Heart right ventricle (tissue), 16 donors: ENCODE measurements at regions of chr17 and their contacts with region 1.

Region 1: DNA sequence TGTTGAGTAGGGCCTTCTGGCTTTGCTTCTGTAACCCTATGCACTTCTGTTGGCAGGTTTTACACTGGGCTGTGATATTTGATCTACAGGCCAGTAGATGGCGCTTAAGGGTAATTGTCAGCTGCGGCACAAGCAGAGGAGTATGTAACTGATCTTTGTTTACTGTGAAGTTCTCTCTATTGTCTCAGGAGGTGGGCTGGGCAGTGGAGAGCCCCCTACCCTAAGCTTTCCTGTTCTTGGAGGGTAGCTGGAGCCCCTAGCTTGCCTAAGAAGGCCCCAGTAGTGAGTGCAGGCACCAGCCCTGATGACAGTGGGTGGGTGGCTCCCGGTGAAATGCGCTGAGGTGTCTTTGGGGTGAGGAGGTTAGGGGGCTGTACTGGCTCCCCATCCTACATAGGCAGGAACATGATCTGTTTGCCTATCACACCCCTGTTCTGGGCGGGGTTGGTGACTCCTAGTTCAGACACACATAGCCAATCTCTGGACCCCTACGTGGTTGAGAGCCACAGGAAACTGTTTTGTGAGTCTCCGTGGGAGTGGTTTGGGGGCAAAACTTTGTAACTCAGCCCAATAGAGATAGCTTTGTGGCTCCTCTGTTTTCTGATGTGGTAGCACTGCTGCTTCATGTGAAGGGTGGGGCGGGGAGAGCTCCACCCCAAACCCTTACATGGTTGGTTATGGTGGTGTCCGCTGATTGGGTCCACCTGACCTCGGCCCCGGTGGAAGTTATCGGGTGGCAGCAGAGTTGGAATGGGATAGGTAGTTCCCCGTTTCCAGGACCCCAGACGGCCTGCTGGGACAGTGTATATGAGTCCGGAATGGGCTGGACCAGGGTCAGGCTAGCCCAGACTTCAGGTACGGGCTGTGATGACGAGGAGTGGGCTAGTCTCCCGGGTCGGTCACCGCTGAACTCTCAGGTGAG is 60.4 kb downstream of the SLFN11 start:
- DNase-seq: peak; percentile 33 to 60
- ATAC-seq: peak; percentile 84 to 92 (median 90)
- H3K4me3 ChIP-seq: peak overlapping the region in 9 of 10 donors; percentile 31 to 58 (median 53)
- H3K27ac ChIP-seq: peak overlapping the region; percentile 25 to 91 (median 80)
- H3K4me1 ChIP-seq: peaks cover 7 to 35% (median 33%) of the 10 kb centered on the region in 9 donors
- H3K27me3 ChIP-seq: no peaks in the 10 kb centered on the region
- CTCF ChIP-seq: peak; percentile 55 to 91 (median 83)

Region 2: DNA sequence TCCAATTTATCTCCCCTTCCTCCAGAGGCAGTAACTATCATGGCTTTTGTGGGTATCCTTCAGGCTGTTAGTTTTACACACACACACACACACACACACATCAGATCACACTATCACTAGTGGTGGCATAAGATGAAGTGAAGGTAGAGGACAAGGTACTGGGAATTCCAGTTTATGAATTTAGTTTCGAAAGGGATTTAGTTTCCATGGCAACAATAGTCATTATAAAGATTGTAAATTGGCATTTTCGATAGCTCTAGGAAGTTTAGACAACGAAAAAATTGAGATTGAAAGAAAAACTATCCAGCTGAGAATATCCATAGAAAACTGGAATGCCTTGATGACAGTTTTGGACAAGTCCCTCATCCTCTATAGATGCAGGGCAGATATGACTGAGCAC is 39.4 kb before region 1 on chr17:
- intact Hi-C with region 1: no loop called
- DNase-seq: no peak
- ATAC-seq: no peak
- H3K4me3 ChIP-seq: no peak overlapping the region
- H3K27ac ChIP-seq: no peak overlapping the region
- H3K4me1 ChIP-seq: no peaks in the 10 kb centered on the region
- H3K27me3 ChIP-seq: peaks cover 0 to 3% (median 0%) of the 10 kb centered on the region in 7 donors
- CTCF ChIP-seq: no peak

Region 3: GRCh38 chr17:35345926-35346771 is 33.1 kb after region 1 on chr17:
- intact Hi-C with region 1: loop called in 3 of 10 experiments (anchors 1 to 2 kb)
- DNase-seq: peak; percentile 78 to 87
- ATAC-seq: peak; percentile 92 to 97 (median 94)
- H3K4me3 ChIP-seq: peak overlapping the region; percentile 16 to 56 (median 50)
- H3K27ac ChIP-seq: peak overlapping the region; percentile 16 to 96 (median 88)
- H3K4me1 ChIP-seq: peaks cover 3 to 54% (median 23%) of the 10 kb centered on the region in 9 donors
- H3K27me3 ChIP-seq: peaks cover 0 to 40% (median 11%) of the 10 kb centered on the region in 7 donors
- CTCF ChIP-seq: no peak

Region 4: GRCh38 chr17:35373534-35373983 is 60.5 kb after region 1 on chr17 and contains the start of gene SLFN11:
- intact Hi-C with region 1: loop called in 5 of 10 experiments (anchors 2 to 10 kb)
- DNase-seq: peak; percentile 83 to 92
- ATAC-seq: peak; percentile 96 to 98 (median 96)
- H3K4me3 ChIP-seq: peak within 1 kb of the TSS; percentile 50 to 76 (median 70)
- H3K27ac ChIP-seq: peak within 1 kb of the TSS; percentile 93 to 99 (median 97)
- H3K4me1 ChIP-seq: peaks cover 0 to 71% (median 20%) of the 10 kb centered on the region in 9 donors
- H3K27me3 ChIP-seq: peaks cover 0 to 17% (median 0%) of the 10 kb centered on the region in 7 donors
- CTCF ChIP-seq: no peak
- total RNA-seq, gene SLFN11: 11.5 to 25.7 (median 18.5) TPM

Region 5: DNA sequence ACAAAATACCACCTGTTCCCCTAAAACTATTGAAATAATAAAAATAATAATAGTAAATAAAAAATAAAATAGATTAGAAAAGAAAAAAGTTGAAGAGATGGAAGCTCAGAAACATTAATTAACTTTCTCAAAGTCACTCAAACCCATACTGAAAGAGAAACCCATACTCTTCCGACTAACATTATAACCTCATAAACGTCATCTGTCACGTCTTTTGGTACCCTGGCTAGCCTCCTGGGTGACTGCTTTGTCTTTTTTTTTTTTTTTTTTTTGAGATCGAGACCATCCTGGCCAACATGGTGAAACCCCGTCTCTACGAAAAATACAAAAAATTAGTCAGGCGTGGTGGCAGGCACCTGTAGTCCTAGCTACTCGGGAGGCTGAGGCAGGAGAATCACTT is 216.8 kb after region 1 on chr17:
- intact Hi-C with region 1: loop called in 7 of 10 experiments (anchors 1 to 5 kb)
- DNase-seq: no peak
- ATAC-seq: no peak
- H3K4me3 ChIP-seq: no peak overlapping the region
- H3K27ac ChIP-seq: no peak overlapping the region
- H3K4me1 ChIP-seq: peaks cover 0 to 6% (median 0%) of the 10 kb centered on the region in 9 donors
- H3K27me3 ChIP-seq: no peaks in the 10 kb centered on the region
- CTCF ChIP-seq: no peak

Region 6: GRCh38 chr17:35747540-35748017 is 434.5 kb after region 1 on chr17:
- intact Hi-C with region 1: loop called in 2 of 10 experiments (anchors 5 to 10 kb)
- DNase-seq: peak; percentile 62 to 79
- ATAC-seq: peak; percentile 75 to 90 (median 86)
- H3K4me3 ChIP-seq: no peak overlapping the region
- H3K27ac ChIP-seq: no peak overlapping the region
- H3K4me1 ChIP-seq: peaks cover 0 to 16% (median 5%) of the 10 kb centered on the region in 9 donors
- H3K27me3 ChIP-seq: peaks cover 0 to 64% (median 50%) of the 10 kb centered on the region in 7 donors
- CTCF ChIP-seq: peak; percentile 82 to 94 (median 89)